ENCODE measurements at regions of chr1 and their contacts with region 1.

Region 1: DNA sequence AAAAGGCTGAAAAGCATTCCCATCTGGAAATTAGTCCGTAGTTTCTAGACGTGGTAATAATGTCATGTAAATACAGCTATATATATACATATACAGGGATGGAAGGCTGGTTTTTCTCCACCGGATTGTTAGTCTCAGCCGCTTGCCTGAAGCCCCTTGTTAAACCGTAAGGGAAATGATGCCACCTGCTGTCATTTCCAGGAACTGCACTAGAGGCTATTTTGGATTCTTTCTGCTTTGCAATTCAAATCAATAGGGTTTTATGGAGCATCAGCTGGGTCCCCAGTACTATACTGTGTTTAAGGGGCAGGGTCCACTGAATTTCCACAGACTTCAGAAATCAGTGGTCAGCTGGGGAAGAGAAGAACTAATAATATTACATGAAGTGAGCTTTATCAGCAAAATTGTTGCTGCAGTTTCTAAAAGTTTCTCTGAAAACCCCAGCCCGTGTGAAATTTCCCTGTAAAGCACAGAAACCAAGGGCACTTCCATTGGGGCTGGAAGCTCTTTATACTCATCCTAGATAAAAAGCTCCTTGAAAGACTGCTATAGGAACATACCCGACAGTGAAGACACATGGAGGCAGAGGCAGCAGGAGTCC is 33.8 kb upstream of the MPZL1 start:
- DNase-seq: peak; percentile 93
- H3K4me3 Mint-ChIP-seq: no peak overlapping the region
- H3K27ac Mint-ChIP-seq: no peak overlapping the region
- H3K4me1 Mint-ChIP-seq: peaks cover 26% of the 10 kb centered on the region
- H3K27me3 Mint-ChIP-seq: no peaks in the 10 kb centered on the region
- CTCF ChIP-seq: peak; percentile 97

Region 2: GRCh38 chr1:167263819-167264464 is 424.1 kb before region 1 on chr1:
- CTCF ChIA-PET with region 1: interaction called, 7 read pairs
- POLR2A ChIA-PET with region 1: interaction called, 3 read pairs
- intact Hi-C with region 1: loop called (anchors 2 kb)
- DNase-seq: no peak
- H3K4me3 Mint-ChIP-seq: no peak overlapping the region
- H3K27ac Mint-ChIP-seq: no peak overlapping the region
- H3K4me1 Mint-ChIP-seq: peaks cover 4% of the 10 kb centered on the region
- H3K27me3 Mint-ChIP-seq: no peaks in the 10 kb centered on the region
- CTCF ChIP-seq: no peak

Region 3: GRCh38 chr1:167563579-167564246 is 124.3 kb before region 1 on chr1:
- CTCF ChIA-PET with region 1: interaction called, 42 read pairs
- POLR2A ChIA-PET with region 1: interaction called, 9 read pairs
- intact Hi-C with region 1: loop called (anchors 2 kb)
- DNase-seq: peak; percentile 79
- H3K4me3 Mint-ChIP-seq: peak overlapping the region; percentile 64
- H3K27ac Mint-ChIP-seq: peak overlapping the region; percentile 85
- H3K4me1 Mint-ChIP-seq: peaks cover 46% of the 10 kb centered on the region
- H3K27me3 Mint-ChIP-seq: no peaks in the 10 kb centered on the region
- CTCF ChIP-seq: no peak

Region 4: GRCh38 chr1:167599957-167600581 is 88.0 kb before region 1 on chr1:
- CTCF ChIA-PET with region 1: interaction called, 400 read pairs
- POLR2A ChIA-PET with region 1: interaction called, 52 read pairs
- intact Hi-C with region 1: loop called (anchors 1 kb)
- DNase-seq: peak; percentile 75
- H3K4me3 Mint-ChIP-seq: no peak overlapping the region
- H3K27ac Mint-ChIP-seq: no peak overlapping the region
- H3K4me1 Mint-ChIP-seq: peaks cover 10% of the 10 kb centered on the region
- H3K27me3 Mint-ChIP-seq: no peaks in the 10 kb centered on the region
- CTCF ChIP-seq: peak; percentile 73

Region 5: DNA sequence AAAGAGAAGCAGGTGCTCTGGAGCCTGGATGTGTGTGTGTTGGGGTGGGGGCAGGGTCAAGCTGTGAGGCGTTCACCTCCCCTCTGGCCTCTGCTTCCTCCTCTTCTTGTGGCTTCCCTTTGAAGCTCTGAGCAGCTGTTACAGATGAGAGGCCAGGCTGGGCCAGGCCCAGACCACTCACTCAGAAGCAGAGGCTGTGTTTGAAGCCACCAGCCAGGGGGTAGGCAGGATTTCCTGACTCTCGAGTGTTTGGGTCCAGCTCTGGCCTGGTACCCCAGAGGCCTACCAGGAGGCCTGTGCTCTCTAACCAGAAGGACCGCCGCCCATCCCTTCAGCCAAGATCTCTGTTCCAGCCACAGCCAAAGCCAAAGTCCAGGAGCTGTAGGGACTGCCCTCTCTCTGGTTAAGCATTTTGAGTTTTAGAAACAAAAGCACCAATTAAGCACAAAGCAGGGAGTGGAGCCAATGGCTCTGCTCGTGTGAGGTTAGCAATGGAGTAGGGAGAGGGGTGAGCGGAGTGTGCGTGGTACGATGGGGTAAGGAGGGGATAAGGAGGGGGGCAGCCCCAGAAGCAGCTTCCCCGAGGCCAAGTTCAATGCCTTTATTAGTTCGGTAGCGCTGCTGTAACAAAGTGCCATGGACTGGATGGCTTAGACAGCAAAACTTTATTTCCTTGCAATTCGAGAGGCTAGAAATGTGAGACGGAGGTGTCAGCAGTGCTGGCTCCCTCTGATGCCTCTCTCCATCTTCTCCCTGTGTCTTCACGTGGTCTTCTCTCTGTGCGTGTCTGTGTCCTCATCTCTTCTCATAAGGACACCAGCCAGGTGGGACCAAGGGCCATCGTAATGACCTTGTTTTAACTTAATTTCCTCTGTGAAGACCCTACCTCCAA is 37.5 kb before region 1 on chr1:
- CTCF ChIA-PET with region 1: interaction called, 18 read pairs
- POLR2A ChIA-PET with region 1: no interaction called
- intact Hi-C with region 1: no loop called
- DNase-seq: no peak
- H3K4me3 Mint-ChIP-seq: no peak overlapping the region
- H3K27ac Mint-ChIP-seq: no peak overlapping the region
- H3K4me1 Mint-ChIP-seq: no peaks in the 10 kb centered on the region
- H3K27me3 Mint-ChIP-seq: no peaks in the 10 kb centered on the region
- CTCF ChIP-seq: no peak

Region 6: DNA sequence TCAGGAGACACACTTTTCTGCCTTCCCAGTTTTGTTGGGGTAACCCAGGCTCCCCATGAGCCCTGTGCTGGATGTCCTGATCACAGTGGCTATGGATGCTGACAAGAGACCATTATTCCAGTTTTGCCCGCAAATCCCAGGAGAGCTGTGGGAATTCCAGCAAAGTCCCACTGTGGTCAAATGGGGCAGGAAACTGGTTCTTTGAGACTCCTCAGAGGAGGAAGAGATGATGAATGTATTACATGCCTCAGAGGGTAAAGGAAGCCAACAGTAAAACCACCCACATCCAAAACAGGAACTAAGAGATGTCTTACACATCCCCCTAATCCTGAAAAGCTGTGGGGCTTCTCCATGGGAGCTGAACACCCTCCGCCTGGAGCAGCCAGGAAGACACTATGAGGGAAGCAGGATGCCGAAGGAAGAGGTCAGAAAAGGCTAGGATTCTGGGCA is 20.9 kb after region 1 on chr1:
- CTCF ChIA-PET with region 1: interaction called, 49 read pairs
- POLR2A ChIA-PET with region 1: interaction called, 3 read pairs
- intact Hi-C with region 1: no loop called
- DNase-seq: no peak
- H3K4me3 Mint-ChIP-seq: no peak overlapping the region
- H3K27ac Mint-ChIP-seq: no peak overlapping the region
- H3K4me1 Mint-ChIP-seq: peaks cover 8% of the 10 kb centered on the region
- H3K27me3 Mint-ChIP-seq: peaks cover 6% of the 10 kb centered on the region
- CTCF ChIP-seq: no peak

Region 7: GRCh38 chr1:167878372-167879160 is 190.5 kb after region 1 on chr1:
- CTCF ChIA-PET with region 1: no interaction called
- POLR2A ChIA-PET with region 1: no interaction called
- intact Hi-C with region 1: no loop called
- DNase-seq: no peak
- H3K4me3 Mint-ChIP-seq: no peak overlapping the region
- H3K27ac Mint-ChIP-seq: no peak overlapping the region
- H3K4me1 Mint-ChIP-seq: peaks cover 9% of the 10 kb centered on the region
- H3K27me3 Mint-ChIP-seq: no peaks in the 10 kb centered on the region
- CTCF ChIP-seq: no peak